Activated CD8-positive, alpha-beta T cell treated with anti-CD3 and anti-CD28 coated beads, Interleukin-2, amount 10 ng/mL, durations not matched to agents 7 days and 5 days (primary cell): ENCODE measurements at regions of chrX and their contacts with region 1.

Region 1: GRCh38 chrX:136608295-136609171 is 39.4 kb upstream of the CD40LG start:
- DNase-seq: peak; percentile 62
- ATAC-seq: peak; percentile 74
- H3K4me3 Mint-ChIP-seq: no peak overlapping the region
- H3K27ac Mint-ChIP-seq: no peak overlapping the region
- H3K4me1 Mint-ChIP-seq: peaks cover 34% of the 10 kb centered on the region
- H3K27me3 Mint-ChIP-seq: no peaks in the 10 kb centered on the region

Region 2: GRCh38 chrX:136431625-136432024 is 176.9 kb before region 1 on chrX:
- CTCF ChIA-PET with region 1: no interaction called
- POLR2A ChIA-PET with region 1: no interaction called
- DNase-seq: no peak
- ATAC-seq: no peak
- H3K4me3 Mint-ChIP-seq: no peak overlapping the region
- H3K27ac Mint-ChIP-seq: no peak overlapping the region
- H3K4me1 Mint-ChIP-seq: peaks cover 3% of the 10 kb centered on the region
- H3K27me3 Mint-ChIP-seq: peaks cover 4% of the 10 kb centered on the region

Region 3: GRCh38 chrX:136646602-136647239 is 38.2 kb after region 1 on chrX:
- CTCF ChIA-PET with region 1: no interaction called
- POLR2A ChIA-PET with region 1: no interaction called
- DNase-seq: no peak
- ATAC-seq: no peak
- H3K4me3 Mint-ChIP-seq: no peak overlapping the region
- H3K27ac Mint-ChIP-seq: no peak overlapping the region
- H3K4me1 Mint-ChIP-seq: peaks cover 58% of the 10 kb centered on the region
- H3K27me3 Mint-ChIP-seq: no peaks in the 10 kb centered on the region

Region 4: DNA sequence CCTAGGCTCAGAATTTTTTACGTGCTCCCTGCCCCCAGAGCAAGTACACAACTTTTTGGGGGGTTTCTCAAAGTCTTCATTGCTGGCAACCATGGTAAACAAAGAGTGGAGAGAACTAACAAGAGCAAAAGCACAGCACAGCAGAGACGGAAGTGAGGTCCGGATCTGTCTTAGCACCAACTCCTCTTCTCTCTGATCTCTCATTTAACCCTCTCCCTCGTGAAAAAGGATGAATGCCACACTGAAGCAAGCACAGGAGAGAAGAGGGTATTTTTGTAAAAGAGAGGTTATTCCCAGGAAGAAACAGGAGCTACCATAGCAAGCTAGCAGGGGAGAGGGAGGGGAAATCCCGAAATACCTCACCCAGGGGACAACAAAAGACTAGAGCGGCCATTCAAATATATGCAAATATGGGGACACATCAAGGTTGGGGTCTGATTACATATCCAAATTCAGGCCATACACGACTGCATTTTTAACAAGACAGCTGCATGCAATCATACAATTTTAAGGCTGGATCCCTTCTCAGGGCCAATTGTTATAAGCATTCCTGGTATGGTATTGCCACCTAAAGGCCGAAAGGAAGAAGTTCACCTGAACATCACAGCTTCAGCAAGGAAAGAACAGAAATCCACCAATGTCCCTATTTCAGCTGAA is 86.0 kb after region 1 on chrX:
- CTCF ChIA-PET with region 1: interaction called, 30 read pairs
- POLR2A ChIA-PET with region 1: interaction called, 3 read pairs
- DNase-seq: peak; percentile 31
- ATAC-seq: peak; percentile 61
- H3K4me3 Mint-ChIP-seq: peak overlapping the region; percentile 45
- H3K27ac Mint-ChIP-seq: peak overlapping the region; percentile 93
- H3K4me1 Mint-ChIP-seq: peaks cover 81% of the 10 kb centered on the region
- H3K27me3 Mint-ChIP-seq: no peaks in the 10 kb centered on the region

Region 5: DNA sequence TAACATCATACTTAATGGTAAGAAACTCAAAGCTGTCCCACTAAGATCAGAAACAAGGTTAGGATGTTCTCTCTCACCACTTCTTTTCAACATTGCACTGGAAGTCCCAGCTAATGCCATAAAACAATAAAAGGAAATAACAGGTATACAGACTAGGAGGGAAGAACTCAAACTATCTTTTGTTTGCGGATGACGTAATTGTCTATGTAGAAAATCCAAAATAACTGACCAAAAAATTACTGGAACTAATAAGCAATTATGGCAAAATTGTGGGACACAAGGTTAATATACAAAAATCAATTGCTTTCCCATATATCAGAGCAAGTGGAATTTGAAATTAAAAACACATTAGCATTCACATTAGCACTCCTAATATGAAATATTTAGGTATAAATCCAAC is 529.0 kb after region 1 on chrX:
- CTCF ChIA-PET with region 1: no interaction called
- POLR2A ChIA-PET with region 1: no interaction called
- DNase-seq: no peak
- ATAC-seq: no peak
- H3K4me3 Mint-ChIP-seq: no peak overlapping the region
- H3K27ac Mint-ChIP-seq: no peak overlapping the region
- H3K4me1 Mint-ChIP-seq: no peaks in the 10 kb centered on the region
- H3K27me3 Mint-ChIP-seq: peaks cover 3% of the 10 kb centered on the region